ENCODE measurements at regions of chr19 and their contacts with region 1.

Region 1: GRCh38 chr19:55418185-55418584 is 10.6 kb upstream of the UBE2S start:
- DNase-seq: peak; percentile 74
- ATAC-seq: peak; percentile 90
- H3K4me3 Mint-ChIP-seq: no peak overlapping the region
- H3K27ac Mint-ChIP-seq: no peak overlapping the region
- H3K4me1 Mint-ChIP-seq: peaks cover 14% of the 10 kb centered on the region
- H3K27me3 Mint-ChIP-seq: no peaks in the 10 kb centered on the region

Region 2: DNA sequence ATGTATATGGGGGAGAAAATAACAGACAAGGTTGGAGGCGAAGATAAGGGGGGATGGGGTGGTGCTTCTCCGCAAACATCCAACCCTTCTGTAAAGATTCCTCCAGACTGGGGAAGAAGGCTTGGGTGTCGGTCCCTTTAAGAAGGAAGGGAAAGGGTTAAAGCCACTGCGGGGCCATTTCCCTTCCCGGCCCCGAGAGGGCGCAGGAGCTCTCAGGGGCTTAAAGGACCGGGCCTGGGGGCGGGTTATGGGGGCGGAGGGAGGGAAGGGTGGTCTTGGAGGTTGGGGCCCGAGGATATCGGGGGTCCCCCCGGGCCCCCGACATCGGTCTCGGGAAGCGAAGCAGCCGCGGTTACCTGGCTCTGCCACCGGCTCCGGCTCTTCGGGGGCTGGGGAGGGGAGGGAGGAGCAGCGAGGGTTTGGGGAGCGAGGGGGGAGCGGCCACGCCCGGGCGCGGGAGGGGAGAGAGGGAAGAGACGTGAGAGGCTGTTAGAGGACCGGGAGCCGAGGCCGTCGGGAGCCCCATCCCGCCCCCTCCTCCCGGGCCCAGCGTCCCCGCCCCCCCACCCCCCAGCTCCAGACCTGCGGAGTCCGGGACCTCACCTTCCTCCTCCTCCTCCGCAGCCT is 272.0 kb before region 1 on chr19:
- CTCF ChIA-PET with region 1: no interaction called
- POLR2A ChIA-PET with region 1: no interaction called
- intact Hi-C with region 1: loop called (anchors 1 to 2 kb)
- DNase-seq: peak; percentile 59
- ATAC-seq: peak; percentile 23
- H3K4me3 Mint-ChIP-seq: no peak overlapping the region
- H3K27ac Mint-ChIP-seq: no peak overlapping the region
- H3K4me1 Mint-ChIP-seq: peaks cover 2% of the 10 kb centered on the region
- H3K27me3 Mint-ChIP-seq: peaks cover 23% of the 10 kb centered on the region

Region 3: GRCh38 chr19:55216461-55217198 is 201.6 kb before region 1 on chr19:
- CTCF ChIA-PET with region 1: no interaction called
- POLR2A ChIA-PET with region 1: no interaction called
- intact Hi-C with region 1: loop called in 1 of 2 experiments (anchors 2 kb)
- DNase-seq: peak; percentile 84
- ATAC-seq: peak; percentile 90
- H3K4me3 Mint-ChIP-seq: peak overlapping the region; percentile 43
- H3K27ac Mint-ChIP-seq: no peak overlapping the region
- H3K4me1 Mint-ChIP-seq: peaks cover 15% of the 10 kb centered on the region
- H3K27me3 Mint-ChIP-seq: peaks cover 20% of the 10 kb centered on the region

Region 4: DNA sequence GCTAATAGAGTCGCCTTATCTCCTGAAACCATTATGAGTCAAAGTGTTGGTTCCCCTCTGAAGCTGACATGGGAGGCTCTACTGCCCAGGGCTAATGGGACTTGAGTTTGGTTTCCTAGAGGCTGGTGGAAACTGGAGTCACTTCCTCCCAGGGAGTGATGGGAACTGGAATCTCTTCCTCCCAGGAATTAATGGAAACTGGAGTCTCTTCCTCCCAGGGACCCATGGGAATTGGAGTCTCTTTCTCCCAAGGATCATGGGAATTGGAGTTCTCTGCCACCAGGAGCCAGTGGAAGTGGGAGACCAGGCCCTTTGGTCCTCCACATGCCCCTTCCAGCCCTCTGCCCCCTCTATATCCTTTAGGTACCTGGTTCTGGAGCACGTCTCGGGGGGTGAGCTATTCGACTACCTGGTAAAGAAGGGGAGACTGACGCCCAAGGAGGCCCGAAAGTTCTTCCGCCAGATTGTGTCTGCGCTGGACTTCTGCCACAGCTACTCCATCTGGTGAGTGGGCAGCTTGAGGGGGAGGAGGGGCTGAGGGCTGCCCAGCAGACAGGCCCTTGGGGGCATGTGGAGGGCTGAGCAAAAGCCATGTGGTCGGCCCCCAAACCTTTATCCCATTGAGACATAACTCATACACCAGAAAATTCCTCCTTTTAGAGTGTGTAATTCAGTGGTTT is 128.9 kb before region 1 on chr19:
- CTCF ChIA-PET with region 1: no interaction called
- POLR2A ChIA-PET with region 1: no interaction called
- intact Hi-C with region 1: loop called in 1 of 2 experiments (anchors 1 kb)
- DNase-seq: no peak
- ATAC-seq: no peak
- H3K4me3 Mint-ChIP-seq: no peak overlapping the region
- H3K27ac Mint-ChIP-seq: no peak overlapping the region
- H3K4me1 Mint-ChIP-seq: peaks cover 6% of the 10 kb centered on the region
- H3K27me3 Mint-ChIP-seq: no peaks in the 10 kb centered on the region

Region 5: GRCh38 chr19:55301459-55302317 is 116.5 kb before region 1 on chr19:
- CTCF ChIA-PET with region 1: interaction called, 13 read pairs
- POLR2A ChIA-PET with region 1: no interaction called
- intact Hi-C with region 1: loop called in 1 of 2 experiments (anchors 1 kb)
- DNase-seq: peak; percentile 97
- ATAC-seq: peak; percentile 90
- H3K4me3 Mint-ChIP-seq: peak overlapping the region; percentile 81
- H3K27ac Mint-ChIP-seq: peak overlapping the region; percentile 90
- H3K4me1 Mint-ChIP-seq: peaks cover 6% of the 10 kb centered on the region
- H3K27me3 Mint-ChIP-seq: no peaks in the 10 kb centered on the region